Naive thymus-derived CD4-positive, alpha-beta T cell (primary cell): ENCODE measurements at regions of chr16 and their contacts with region 1.

Region 1: GRCh38 chr16:71845639-71846430 is at the start of gene ATXN1L:
- DNase-seq: peak; percentile 91 to 100 (median 95)
- ATAC-seq: peak; percentile 97
- H3K4me3 ChIP-seq: peak within 1 kb of the TSS; percentile 97
- H3K4me3 Mint-ChIP-seq: peak within 1 kb of the TSS; percentile 92 to 96 (median 94)
- H3K27ac ChIP-seq: peak within 1 kb of the TSS; percentile 92
- H3K27ac Mint-ChIP-seq: peak within 1 kb of the TSS; percentile 95 to 98 (median 97)
- H3K4me1 ChIP-seq: peaks cover 10 to 16% of the 10 kb centered on the region in 2 donors
- H3K4me1 Mint-ChIP-seq: peaks cover 18 to 50% (median 42%) of the 10 kb centered on the region in 7 donors
- H3K27me3 ChIP-seq: no peaks in the 10 kb centered on the region
- H3K27me3 Mint-ChIP-seq: no peaks in the 10 kb centered on the region
- total RNA-seq, gene ATXN1L: 24.6 to 52.9 (median 30.7) TPM

Region 2: DNA sequence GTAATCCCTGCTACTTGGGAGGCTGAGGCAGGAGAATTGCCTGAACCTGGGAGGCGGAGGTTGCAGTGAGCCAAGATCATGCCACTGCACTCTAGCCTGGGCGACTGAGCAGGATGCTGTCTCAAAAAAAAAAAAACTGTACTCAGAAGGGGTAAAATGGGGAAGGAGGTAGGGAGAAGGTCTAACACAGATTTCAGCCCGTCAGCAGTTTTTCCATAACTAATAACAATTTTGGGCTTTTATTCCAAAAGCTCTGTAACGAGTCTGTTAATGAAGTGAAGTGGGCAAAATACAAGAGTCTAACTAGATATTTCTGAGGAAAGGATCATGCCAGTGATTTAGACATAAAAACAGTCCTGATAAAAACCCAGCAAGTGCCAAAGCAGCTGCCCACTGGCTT is 27.4 kb after region 1 on chr16:
- CTCF ChIA-PET with region 1: no interaction called
- POLR2A ChIA-PET with region 1: interaction called, 9 read pairs
- intact Hi-C with region 1: loop called in 1 of 2 experiments (anchors 2 kb)
- DNase-seq: no peak
- ATAC-seq: no peak
- H3K4me3 ChIP-seq: no peak overlapping the region
- H3K4me3 Mint-ChIP-seq: peak overlapping the region; percentile 61 to 83 (median 77)
- H3K27ac ChIP-seq: peak overlapping the region; percentile 25
- H3K27ac Mint-ChIP-seq: peak overlapping the region; percentile 86 to 96 (median 91)
- H3K4me1 ChIP-seq: peaks cover 0 to 6% of the 10 kb centered on the region in 2 donors
- H3K4me1 Mint-ChIP-seq: peaks cover 16 to 37% (median 24%) of the 10 kb centered on the region in 7 donors
- H3K27me3 ChIP-seq: no peaks in the 10 kb centered on the region
- H3K27me3 Mint-ChIP-seq: no peaks in the 10 kb centered on the region

Region 3: DNA sequence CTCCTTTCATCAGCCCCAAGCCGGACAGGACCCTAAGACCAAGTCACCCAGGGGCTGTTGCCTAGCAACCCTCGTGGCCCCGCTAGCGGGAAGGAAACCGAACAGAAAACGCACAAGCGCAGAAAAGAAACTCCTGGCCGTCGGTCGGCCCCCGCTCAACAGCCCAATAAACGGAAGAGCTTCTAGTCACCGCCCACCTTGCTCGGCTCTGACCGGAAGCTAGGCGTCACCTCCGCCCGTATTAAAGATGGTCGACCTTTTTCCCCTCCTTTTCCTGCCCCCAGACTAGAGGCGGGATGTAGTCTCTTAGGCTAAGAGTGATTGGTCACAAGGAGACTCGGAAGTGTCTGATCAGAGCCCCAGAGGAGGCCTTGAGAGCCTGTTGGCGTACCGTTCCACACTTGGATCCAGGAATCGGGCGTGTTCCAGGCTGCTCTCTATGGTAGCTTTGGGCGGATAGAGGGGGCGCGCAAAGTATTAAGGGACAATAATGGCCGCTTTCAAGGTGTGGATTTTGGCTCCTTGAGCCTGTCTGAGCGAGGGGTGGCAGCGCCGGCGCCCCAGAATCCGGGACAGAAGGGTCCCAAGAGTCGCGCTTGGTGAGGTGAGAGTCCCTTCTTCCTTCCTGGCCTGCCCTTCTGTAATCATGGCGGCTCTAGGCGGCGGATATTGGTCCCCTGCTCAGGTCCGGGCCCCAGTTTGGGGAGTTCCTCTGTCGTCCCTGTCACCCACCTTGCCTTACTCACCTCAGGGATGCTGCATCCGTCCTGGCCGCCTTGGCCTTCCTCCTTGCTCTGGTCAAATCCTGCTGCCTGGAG is 247.8 kb after region 1 on chr16 and contains the starts of genes DHX38 and TXNL4B:
- CTCF ChIA-PET with region 1: no interaction called
- POLR2A ChIA-PET with region 1: interaction called, 3 read pairs
- intact Hi-C with region 1: loop called (anchors 1 kb)
- DNase-seq: peak; percentile 70 to 95 (median 92)
- ATAC-seq: peak; percentile 98
- H3K4me3 ChIP-seq: peak within 1 kb of the TSS; percentile 86
- H3K4me3 Mint-ChIP-seq: peak within 1 kb of the TSS; percentile 94 to 100 (median 98)
- H3K27ac ChIP-seq: peak within 1 kb of the TSS; percentile 93
- H3K27ac Mint-ChIP-seq: peak within 1 kb of the TSS; percentile 92 to 100 (median 99)
- H3K4me1 ChIP-seq: peaks cover 21 to 24% of the 10 kb centered on the region in 2 donors
- H3K4me1 Mint-ChIP-seq: peaks cover 33 to 70% (median 63%) of the 10 kb centered on the region in 7 donors
- H3K27me3 ChIP-seq: no peaks in the 10 kb centered on the region
- H3K27me3 Mint-ChIP-seq: no peaks in the 10 kb centered on the region
- total RNA-seq, gene DHX38: 90.1 to 113 (median 104) TPM
- total RNA-seq, gene TXNL4B: 12.5 to 20.9 (median 18.5) TPM